ENCODE measurements at regions of chr12 and their contacts with region 1.

Region 1: DNA sequence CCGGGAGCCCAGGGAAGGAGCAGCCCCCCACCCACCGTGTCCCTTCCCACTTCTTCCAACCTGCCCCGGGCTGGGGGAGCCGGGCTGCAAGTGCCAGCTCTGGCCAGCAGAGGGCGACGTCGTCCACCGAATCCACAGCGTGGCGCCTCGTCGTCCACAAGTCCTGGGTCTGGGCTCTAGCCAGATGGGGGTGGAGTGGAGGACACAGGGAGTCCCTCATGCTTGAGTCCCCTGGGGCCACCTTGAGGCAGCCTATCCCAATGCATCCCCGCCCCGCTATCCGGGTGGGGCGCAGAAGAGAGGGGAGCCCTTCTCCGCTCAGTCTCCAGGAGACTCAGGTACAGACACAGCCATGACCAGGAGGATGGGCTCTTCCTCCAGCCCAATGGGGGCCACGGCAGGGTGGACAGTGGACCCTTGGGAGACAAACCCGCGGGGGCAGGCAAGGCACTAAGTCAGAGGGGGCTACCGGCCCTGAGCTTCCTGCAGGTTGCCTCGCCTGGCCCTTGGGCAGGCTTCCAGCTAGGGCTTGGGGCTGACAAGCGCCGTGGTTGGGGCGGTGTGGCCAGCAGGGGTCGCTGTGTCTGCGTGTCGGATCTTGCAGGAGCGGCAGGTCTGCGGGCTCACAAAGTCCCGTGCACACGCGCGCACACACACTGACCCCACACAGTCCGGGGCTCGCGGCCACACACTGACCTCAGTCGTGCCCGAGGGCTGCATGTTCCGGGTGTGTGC is 5.5 kb downstream of the AQP5 start:
- DNase-seq: peak; percentile 95
- ATAC-seq: peak; percentile 76
- H3K4me3 Mint-ChIP-seq: peak overlapping the region; percentile 59
- H3K27ac Mint-ChIP-seq: no peak overlapping the region
- H3K4me1 Mint-ChIP-seq: peaks cover 10% of the 10 kb centered on the region
- H3K27me3 Mint-ChIP-seq: peaks cover 33% of the 10 kb centered on the region
- CTCF ChIP-seq: peak; percentile 91

Region 2: GRCh38 chr12:49440035-49440434 is 527.2 kb before region 1 on chr12:
- CTCF ChIA-PET with region 1: no interaction called
- POLR2A ChIA-PET with region 1: no interaction called
- DNase-seq: no peak
- ATAC-seq: no peak
- H3K4me3 Mint-ChIP-seq: no peak overlapping the region
- H3K27ac Mint-ChIP-seq: no peak overlapping the region
- H3K4me1 Mint-ChIP-seq: peaks cover 8% of the 10 kb centered on the region
- H3K27me3 Mint-ChIP-seq: no peaks in the 10 kb centered on the region
- CTCF ChIP-seq: no peak

Region 3: GRCh38 chr12:49866859-49867579 is 100.2 kb before region 1 on chr12:
- CTCF ChIA-PET with region 1: interaction called, 99 read pairs
- POLR2A ChIA-PET with region 1: interaction called, 3 read pairs
- DNase-seq: peak; percentile 90
- ATAC-seq: peak; percentile 94
- H3K4me3 Mint-ChIP-seq: no peak overlapping the region
- H3K27ac Mint-ChIP-seq: no peak overlapping the region
- H3K4me1 Mint-ChIP-seq: peaks cover 9% of the 10 kb centered on the region
- H3K27me3 Mint-ChIP-seq: peaks cover 10% of the 10 kb centered on the region
- CTCF ChIP-seq: peak; percentile 96

Region 4: GRCh38 chr12:49930515-49931288 is 36.5 kb before region 1 on chr12:
- CTCF ChIA-PET with region 1: interaction called, 11 read pairs
- POLR2A ChIA-PET with region 1: no interaction called
- DNase-seq: no peak
- ATAC-seq: no peak
- H3K4me3 Mint-ChIP-seq: no peak overlapping the region
- H3K27ac Mint-ChIP-seq: no peak overlapping the region
- H3K4me1 Mint-ChIP-seq: peaks cover 3% of the 10 kb centered on the region; the same call in 1 of the 2 replicates
- H3K27me3 Mint-ChIP-seq: no peaks in the 10 kb centered on the region; the same call in 1 of the 2 replicates
- CTCF ChIP-seq: no peak

Region 5: GRCh38 chr12:50006789-50007436 is 39.7 kb after region 1 on chr12:
- CTCF ChIA-PET with region 1: interaction called, 14 read pairs
- POLR2A ChIA-PET with region 1: no interaction called
- DNase-seq: no peak
- ATAC-seq: no peak
- H3K4me3 Mint-ChIP-seq: no peak overlapping the region
- H3K27ac Mint-ChIP-seq: no peak overlapping the region
- H3K4me1 Mint-ChIP-seq: no peaks in the 10 kb centered on the region
- H3K27me3 Mint-ChIP-seq: no peaks in the 10 kb centered on the region
- CTCF ChIP-seq: no peak

Region 6: DNA sequence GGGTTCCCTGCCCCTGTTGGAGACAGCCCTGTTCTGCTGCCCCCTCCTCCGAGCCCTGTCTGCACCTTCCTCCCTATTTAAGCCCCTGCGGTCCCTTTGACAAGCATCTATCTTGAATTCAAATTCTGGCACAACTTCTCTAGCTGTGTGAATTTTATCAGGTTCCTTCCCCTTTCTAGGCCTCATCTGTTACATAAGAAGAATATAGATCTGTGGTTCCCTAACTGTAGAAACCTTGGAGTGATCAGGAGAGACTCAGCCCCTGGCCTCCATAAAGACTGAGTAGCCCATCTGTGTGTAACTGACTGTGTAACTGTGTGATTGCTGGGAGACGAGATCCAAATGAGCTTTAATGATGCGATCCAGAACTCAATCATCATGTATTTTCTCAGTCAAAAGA is 71.1 kb after region 1 on chr12:
- CTCF ChIA-PET with region 1: interaction called, 64 read pairs
- POLR2A ChIA-PET with region 1: no interaction called
- DNase-seq: no peak
- ATAC-seq: no peak
- H3K4me3 Mint-ChIP-seq: no peak overlapping the region
- H3K27ac Mint-ChIP-seq: no peak overlapping the region
- H3K4me1 Mint-ChIP-seq: peaks cover 4% of the 10 kb centered on the region
- H3K27me3 Mint-ChIP-seq: peaks cover 7% of the 10 kb centered on the region; the same call in 1 of the 2 replicates
- CTCF ChIP-seq: no peak

Region 7: GRCh38 chr12:50084775-50085614 is 117.8 kb after region 1 on chr12 and contains the start of gene SMARCD1:
- CTCF ChIA-PET with region 1: interaction called, 28 read pairs
- POLR2A ChIA-PET with region 1: no interaction called
- DNase-seq: peak; percentile 96
- ATAC-seq: peak; percentile 93
- H3K4me3 Mint-ChIP-seq: peak within 1 kb of the TSS; percentile 89
- H3K27ac Mint-ChIP-seq: peak within 1 kb of the TSS; percentile 94
- H3K4me1 Mint-ChIP-seq: peaks cover 24% of the 10 kb centered on the region
- H3K27me3 Mint-ChIP-seq: peaks cover 26% of the 10 kb centered on the region
- CTCF ChIP-seq: no peak
- total RNA-seq, gene SMARCD1: 150 to 165 TPM (median 152 TPM) in 3 replicates

Region 8: GRCh38 chr12:50529345-50529744 is 562.1 kb after region 1 on chr12:
- CTCF ChIA-PET with region 1: no interaction called
- POLR2A ChIA-PET with region 1: no interaction called
- DNase-seq: no peak
- ATAC-seq: no peak
- H3K4me3 Mint-ChIP-seq: no peak overlapping the region
- H3K27ac Mint-ChIP-seq: no peak overlapping the region
- H3K4me1 Mint-ChIP-seq: peaks cover 19% of the 10 kb centered on the region
- H3K27me3 Mint-ChIP-seq: no peaks in the 10 kb centered on the region
- CTCF ChIP-seq: no peak

Measured in WTC11 (cell line).